Left ventricle myocardium superior (tissue), 1 donor: ENCODE measurements at regions of chr2 and their contacts with region 1.

Region 1: DNA sequence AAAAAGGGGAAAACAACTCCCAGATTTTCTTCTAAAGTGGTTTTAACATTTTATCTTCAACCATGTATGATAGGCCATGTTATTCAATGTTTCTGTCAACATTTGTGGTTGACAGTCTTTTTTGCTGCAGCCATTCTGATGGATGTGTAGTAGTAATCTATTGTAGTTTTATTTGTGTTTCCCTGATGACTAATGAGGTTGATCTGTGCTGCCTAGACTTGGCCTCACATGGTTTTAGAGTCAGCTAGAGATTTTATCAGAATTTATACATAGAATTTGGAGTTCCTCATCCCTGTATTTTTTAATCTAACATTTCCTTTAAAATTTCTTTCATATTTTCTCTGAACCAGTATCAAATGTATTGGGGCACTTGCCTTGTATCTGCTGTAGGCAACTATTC is 19.9 kb upstream of the FSIP2 start:
- DNase-seq: no peak
- ATAC-seq: no peak

Region 2: GRCh38 chr2:185668710-185669109 is 50.0 kb before region 1 on chr2:
- intact Hi-C with region 1: no loop called
- DNase-seq: no peak
- ATAC-seq: no peak

Region 3: DNA sequence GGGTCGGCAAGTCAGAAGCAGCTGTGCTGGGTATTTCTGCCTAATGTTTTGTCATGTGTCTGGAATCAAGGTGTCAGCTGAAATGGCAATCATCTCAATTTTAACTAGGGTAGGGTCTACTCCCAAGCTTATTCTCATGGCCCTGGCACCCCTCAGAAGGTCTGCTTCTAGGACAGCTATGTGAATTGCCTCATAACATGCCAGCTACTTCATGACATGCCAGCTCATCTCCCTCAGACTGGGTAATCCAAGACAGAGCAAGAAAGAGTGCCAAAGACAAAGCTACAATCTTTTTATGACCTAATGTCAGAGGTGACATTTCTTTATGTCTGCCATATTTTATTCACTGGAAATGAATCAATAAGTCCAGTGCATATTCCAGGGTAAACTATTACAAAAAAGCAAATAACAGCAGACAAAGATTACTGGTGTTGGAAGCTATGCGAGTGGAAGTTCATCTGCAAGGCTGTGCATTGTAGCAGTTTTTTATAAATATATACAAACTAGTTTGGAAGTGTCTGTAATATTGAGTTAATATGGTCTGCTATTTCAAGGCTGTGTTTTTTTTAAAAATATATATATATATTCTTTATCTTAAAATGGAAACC is 173.2 kb after region 1 on chr2:
- intact Hi-C with region 1: loop called (anchors 5 kb)
- DNase-seq: no peak
- ATAC-seq: no peak